WTC11 (cell line): ENCODE measurements at regions of chr11 and their contacts with region 1.

Region 1: DNA sequence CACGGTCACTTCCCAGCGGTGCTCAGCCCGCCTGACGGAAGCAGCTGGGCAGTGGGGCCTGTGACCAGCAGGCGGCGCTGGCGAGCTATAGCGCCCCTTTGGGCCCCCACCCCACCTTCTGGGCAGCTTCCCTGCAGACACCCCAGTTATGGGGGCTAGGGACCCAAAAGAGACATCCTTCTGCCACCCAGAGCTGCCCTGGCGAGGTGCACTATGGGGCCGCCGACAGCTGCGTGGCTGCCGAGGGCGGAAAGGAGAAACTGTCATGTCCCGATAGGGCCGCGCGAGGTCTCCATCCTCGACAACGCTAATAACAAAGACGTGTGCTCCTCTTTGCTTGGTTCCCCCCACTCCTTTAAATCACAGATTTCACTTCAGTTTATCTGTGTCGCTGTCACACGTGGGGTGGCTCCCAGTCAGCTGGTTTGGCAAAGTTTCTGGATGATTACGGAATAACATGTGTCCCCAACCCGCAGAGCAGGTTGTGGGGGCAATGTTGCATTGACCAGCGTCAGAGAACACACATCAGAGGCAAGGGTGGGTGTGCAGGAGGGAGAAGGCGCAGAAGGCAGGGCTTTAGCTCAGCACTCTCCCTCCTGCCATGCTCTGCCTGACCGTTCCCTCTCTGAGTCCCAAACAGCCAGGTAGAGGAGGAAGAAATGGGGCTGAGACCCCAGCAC is 674 bp upstream of the MYO7A start:
- DNase-seq: peak; percentile 73
- ATAC-seq: peak; percentile 66
- H3K4me3 Mint-ChIP-seq: peak overlapping the region; percentile 62
- H3K27ac Mint-ChIP-seq: no peak overlapping the region
- H3K4me1 Mint-ChIP-seq: peaks cover 21% of the 10 kb centered on the region
- H3K27me3 Mint-ChIP-seq: no peaks in the 10 kb centered on the region
- CTCF ChIP-seq: peak; percentile 98

Region 2: DNA sequence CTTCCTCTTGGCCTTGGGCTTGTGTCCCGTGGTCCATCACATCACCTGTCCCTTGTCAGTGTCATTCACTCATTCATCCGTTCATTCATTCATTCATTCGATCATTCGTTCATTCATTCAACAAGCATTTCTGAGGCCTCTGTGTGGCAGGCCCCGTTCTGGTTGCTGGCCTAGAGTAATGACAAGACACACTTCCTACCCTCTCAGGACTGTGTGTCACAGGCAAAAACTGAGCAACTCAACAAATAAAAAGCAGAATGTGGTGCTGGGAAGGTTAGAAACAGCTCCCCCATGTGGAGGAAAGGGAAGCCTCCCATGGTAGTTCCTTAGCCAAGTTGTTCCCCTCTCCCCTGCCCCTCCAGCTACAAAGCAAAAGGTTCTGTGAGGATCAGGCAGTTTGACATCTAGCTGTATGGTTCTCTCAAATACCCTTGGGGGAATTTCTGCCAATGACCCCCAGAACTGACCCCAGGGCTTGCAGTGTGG is 26.3 kb before region 1 on chr11:
- CTCF ChIA-PET with region 1: interaction called, 11 read pairs
- POLR2A ChIA-PET with region 1: no interaction called
- DNase-seq: peak; percentile 47
- ATAC-seq: peak; percentile 67
- H3K4me3 Mint-ChIP-seq: no peak overlapping the region
- H3K27ac Mint-ChIP-seq: no peak overlapping the region
- H3K4me1 Mint-ChIP-seq: no peaks in the 10 kb centered on the region
- H3K27me3 Mint-ChIP-seq: no peaks in the 10 kb centered on the region
- CTCF ChIP-seq: peak; percentile 45; the same call in 1 of the 2 replicates

Region 3: DNA sequence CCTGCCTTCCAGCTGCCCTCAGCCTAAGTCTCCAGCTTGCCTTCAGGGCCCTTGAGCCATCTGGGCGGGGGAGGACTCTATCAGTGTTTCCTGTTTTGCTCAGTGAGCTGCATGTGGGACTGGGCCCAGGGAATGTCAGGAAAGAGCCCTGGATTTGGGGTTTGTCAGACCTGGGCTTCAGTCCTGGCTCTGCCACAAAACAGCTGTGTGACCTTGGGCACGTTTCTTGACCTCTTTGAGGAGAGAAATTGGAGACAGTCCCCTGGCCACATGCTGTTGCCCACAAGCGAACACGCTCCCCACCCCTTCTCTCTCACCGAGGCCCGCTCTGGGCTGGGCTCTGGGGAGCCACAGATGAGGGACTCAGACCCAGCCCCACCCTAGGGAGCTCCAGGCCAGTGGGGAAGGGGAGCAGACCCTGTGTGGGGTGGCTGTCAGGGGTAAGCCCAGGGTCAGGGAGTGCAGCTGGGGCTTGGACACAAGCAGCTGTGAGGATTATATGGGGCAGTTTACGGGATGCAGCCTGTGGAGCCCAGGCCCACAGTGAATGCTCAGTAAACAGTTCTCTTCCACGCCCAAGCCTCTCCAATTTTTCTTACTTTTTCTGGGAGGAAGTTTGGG is 13.0 kb after region 1 on chr11:
- CTCF ChIA-PET with region 1: interaction called, 44 read pairs
- POLR2A ChIA-PET with region 1: no interaction called
- DNase-seq: peak; percentile 39
- ATAC-seq: peak; percentile 87
- H3K4me3 Mint-ChIP-seq: no peak overlapping the region
- H3K27ac Mint-ChIP-seq: no peak overlapping the region
- H3K4me1 Mint-ChIP-seq: peaks cover 13% of the 10 kb centered on the region
- H3K27me3 Mint-ChIP-seq: no peaks in the 10 kb centered on the region; the same call in 1 of the 2 replicates
- CTCF ChIP-seq: no peak

Region 4: GRCh38 chr11:77175869-77176539 is 48.6 kb after region 1 on chr11:
- CTCF ChIA-PET with region 1: interaction called, 121 read pairs
- POLR2A ChIA-PET with region 1: interaction called, 5 read pairs
- DNase-seq: peak; percentile 66
- ATAC-seq: peak; percentile 76
- H3K4me3 Mint-ChIP-seq: no peak overlapping the region
- H3K27ac Mint-ChIP-seq: peak overlapping the region; percentile 88
- H3K4me1 Mint-ChIP-seq: peaks cover 54% of the 10 kb centered on the region
- H3K27me3 Mint-ChIP-seq: peaks cover 8% of the 10 kb centered on the region; the same call in 1 of the 2 replicates
- CTCF ChIP-seq: no peak

Region 5: DNA sequence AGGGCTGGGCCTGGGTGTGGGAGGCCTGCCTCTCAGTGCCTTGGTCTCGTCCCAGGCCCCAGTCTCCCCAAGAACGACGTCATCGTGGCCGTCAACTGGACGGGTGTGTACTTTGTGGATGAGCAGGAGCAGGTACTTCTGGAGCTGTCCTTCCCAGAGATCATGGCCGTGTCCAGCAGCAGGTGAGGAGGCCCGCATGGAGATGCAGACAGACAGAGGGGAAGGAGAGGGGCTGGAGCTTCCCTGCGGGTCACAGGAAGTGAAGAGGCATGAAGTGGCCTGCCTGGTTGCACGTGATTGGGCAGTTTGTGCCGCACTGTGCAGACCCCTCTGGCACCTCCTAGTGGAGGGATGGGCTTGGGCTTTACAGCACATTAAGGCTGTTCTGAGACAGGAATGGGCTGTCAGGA is 71.1 kb after region 1 on chr11:
- CTCF ChIA-PET with region 1: interaction called, 14 read pairs
- POLR2A ChIA-PET with region 1: no interaction called
- DNase-seq: peak; percentile 82
- ATAC-seq: peak; percentile 90
- H3K4me3 Mint-ChIP-seq: no peak overlapping the region
- H3K27ac Mint-ChIP-seq: 0 out of 2 replicates have a peak overlapping the region, but pooled peaks have one; percentile 47
- H3K4me1 Mint-ChIP-seq: peaks cover 5% of the 10 kb centered on the region
- H3K27me3 Mint-ChIP-seq: no peaks in the 10 kb centered on the region
- CTCF ChIP-seq: peak; percentile 39